ENCODE measurements at regions of chr5 and their contacts with region 1.

Region 1: GRCh38 chr5:173629628-173630027 is 13.2 kb upstream of the BOD1 start:
- DNase-seq: no peak
- H3K4me3 ChIP-seq: no peak overlapping the region
- CTCF ChIP-seq: peak; percentile 21

Region 2: DNA sequence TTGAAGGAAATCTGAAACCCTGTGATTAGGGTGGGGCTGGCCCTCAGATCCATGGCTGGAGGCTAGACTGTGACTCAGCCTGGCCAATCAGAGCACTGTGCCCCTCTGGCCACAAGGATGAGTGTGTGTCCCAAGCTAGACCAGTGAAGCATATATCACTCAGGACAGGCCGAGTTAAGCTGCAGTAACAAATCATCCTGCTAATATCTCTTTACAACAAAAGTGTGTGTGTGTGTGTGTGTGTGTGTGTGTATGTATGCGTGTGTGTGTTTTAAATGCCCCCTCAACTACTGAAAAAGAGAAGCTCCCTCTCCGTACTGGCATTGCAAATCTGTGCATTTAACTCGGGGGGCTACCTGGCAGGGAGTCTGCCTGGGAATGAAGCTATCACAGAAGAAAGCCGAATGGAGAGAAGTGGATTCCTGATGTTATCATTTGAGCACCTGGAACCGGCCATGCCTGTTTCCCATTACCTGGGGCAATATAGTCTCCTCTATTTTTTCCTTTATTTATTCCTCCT is 327.0 kb before region 1 on chr5:
- CTCF ChIA-PET with region 1: no interaction called
- POLR2A ChIA-PET with region 1: no interaction called
- DNase-seq: no peak
- H3K4me3 ChIP-seq: no peak overlapping the region
- CTCF ChIP-seq: no peak

Region 3: DNA sequence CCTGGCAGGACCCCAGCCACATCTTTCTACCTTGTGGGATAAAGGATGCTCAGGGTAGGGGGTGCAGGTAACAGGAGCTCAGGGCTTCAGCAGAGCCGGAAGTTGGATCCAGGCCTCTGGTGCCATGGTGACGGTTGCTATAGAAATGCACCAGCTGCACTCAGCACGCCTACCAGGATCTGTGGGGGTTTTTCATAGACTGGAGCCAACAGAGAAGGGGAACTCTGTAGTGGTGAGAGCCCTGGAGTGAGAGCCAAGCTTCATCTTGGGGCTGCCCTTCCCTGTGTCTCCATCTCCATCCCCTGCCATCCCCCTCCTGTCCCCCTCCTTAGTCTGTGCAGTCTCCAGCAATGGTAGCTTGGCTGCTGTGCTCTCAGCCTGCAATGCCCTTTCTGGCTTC is 14.3 kb after region 1 on chr5:
- CTCF ChIA-PET with region 1: interaction called, 10 read pairs
- POLR2A ChIA-PET with region 1: no interaction called
- DNase-seq: no peak
- H3K4me3 ChIP-seq: no peak overlapping the region
- CTCF ChIP-seq: no peak